HepG2 (cell line): ENCODE measurements at regions of chr13 and their contacts with region 1.

Region 1: DNA sequence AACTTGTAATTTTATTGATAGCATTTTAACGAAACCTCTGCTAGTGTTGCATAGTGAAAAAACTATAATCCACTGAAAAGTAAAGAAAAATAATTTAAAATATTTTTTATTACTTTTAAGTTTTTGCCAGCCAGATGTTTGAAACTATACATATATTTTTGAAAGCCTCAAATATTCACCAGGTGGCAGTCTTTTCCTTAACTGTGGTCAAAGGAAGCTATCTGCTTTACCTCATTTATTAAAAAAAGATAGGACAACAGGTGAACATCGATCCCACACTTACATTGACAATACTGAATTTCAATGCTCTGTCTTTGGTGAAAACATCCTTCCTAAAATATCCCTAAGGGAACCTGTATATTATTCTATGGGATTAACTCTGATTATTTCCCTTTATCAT is 100.5 kb downstream of the TRPC4 start:
- DNase-seq: peak; percentile 2
- ATAC-seq: no peak
- H3K4me3 ChIP-seq: no peak overlapping the region
- H3K27ac ChIP-seq: no peak overlapping the region
- H3K4me1 ChIP-seq: no peaks in the 10 kb centered on the region
- H3K27me3 ChIP-seq: no peaks in the 10 kb centered on the region
- CTCF ChIP-seq: no peak
- EP300 ChIP-seq: no peak
- POLR2A ChIP-seq: no peak
- RAD21 ChIP-seq: no peak

Region 2: GRCh38 chr13:37752146-37752545 is 16.9 kb before region 1 on chr13:
- CTCF ChIA-PET with region 1: no interaction called
- POLR2A ChIA-PET with region 1: no interaction called
- in situ Hi-C with region 1: no loop called
- intact Hi-C with region 1: no loop called
- DNase-seq: no peak
- ATAC-seq: no peak
- H3K4me3 ChIP-seq: no peak overlapping the region
- H3K27ac ChIP-seq: no peak overlapping the region
- H3K4me1 ChIP-seq: no peaks in the 10 kb centered on the region
- H3K27me3 ChIP-seq: no peaks in the 10 kb centered on the region
- CTCF ChIP-seq: no peak
- EP300 ChIP-seq: no peak
- POLR2A ChIP-seq: no peak
- RAD21 ChIP-seq: no peak

Region 3: GRCh38 chr13:38530492-38530891 is 761.4 kb after region 1 on chr13:
- CTCF ChIA-PET with region 1: no interaction called
- POLR2A ChIA-PET with region 1: no interaction called
- in situ Hi-C with region 1: no loop called
- intact Hi-C with region 1: loop called (anchors 5 kb)
- DNase-seq: no peak
- ATAC-seq: no peak
- H3K4me3 ChIP-seq: no peak overlapping the region
- H3K27ac ChIP-seq: no peak overlapping the region
- H3K4me1 ChIP-seq: no peaks in the 10 kb centered on the region
- H3K27me3 ChIP-seq: no peaks in the 10 kb centered on the region
- CTCF ChIP-seq: peak; percentile 38
- EP300 ChIP-seq: no peak
- POLR2A ChIP-seq: no peak
- RAD21 ChIP-seq: no peak